ENCODE measurements at regions of chr15 and their contacts with region 1.

Region 1: DNA sequence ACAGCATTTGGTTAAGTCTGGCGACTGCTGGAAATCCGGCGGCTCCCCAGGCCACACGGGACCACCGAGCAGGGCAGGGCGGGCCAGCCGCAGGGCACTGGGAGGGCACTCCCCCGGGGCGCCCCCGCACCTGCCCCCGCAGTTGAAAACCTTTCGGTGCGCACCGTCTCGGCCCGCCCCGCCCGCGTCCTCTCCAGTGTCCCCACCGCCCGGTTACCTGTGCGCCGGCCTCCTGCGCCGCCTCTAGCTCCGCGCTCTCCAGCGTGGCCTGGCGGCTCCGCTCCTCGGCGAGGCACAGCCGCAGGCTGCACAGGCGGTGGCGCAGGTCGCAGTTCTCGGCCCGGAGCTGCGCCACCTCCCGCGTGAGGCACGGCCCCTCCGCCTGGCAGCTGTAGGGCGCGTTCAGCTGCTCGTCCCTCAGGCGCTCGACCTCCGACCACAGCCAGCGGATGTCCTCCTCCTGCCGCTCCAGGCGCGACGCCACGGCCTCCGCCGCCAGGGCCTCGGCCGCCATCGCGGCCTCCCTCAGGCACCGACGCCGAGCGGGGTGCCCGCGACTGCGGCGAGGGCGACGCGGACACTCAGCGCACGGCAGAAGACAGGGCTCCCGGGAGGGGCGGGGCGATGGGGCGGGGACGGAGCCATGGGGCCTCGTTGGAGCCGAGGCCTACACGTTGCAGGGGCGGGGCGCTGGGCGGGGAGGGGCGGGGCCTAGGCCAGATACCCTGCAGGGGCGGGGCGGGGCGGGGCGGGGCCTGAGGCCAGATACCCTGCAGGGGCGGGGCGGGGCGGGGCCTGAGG is at the start of gene TARS3:
- DNase-seq: peak; percentile 93 to 100 (median 97)
- ATAC-seq: peak; percentile 92
- H3K4me3 ChIP-seq: peak within 1 kb of the TSS; percentile 64
- H3K4me3 Mint-ChIP-seq: peak within 1 kb of the TSS; percentile 89
- H3K27ac ChIP-seq: peak within 1 kb of the TSS; percentile 61 to 81
- H3K27ac Mint-ChIP-seq: peak within 1 kb of the TSS; percentile 87
- H3K4me1 ChIP-seq: peaks cover 20% of the 10 kb centered on the region
- H3K4me1 Mint-ChIP-seq: peaks cover 42% of the 10 kb centered on the region
- H3K27me3 ChIP-seq: no peaks in the 10 kb centered on the region
- H3K27me3 Mint-ChIP-seq: no peaks in the 10 kb centered on the region
- CTCF ChIP-seq: peak; percentile 38
- total RNA-seq, gene TARS3: 16.6 to 18.1 TPM

Region 2: GRCh38 chr15:101697488-101697887 is 26.6 kb before region 1 on chr15:
- CTCF ChIA-PET with region 1: no interaction called
- POLR2A ChIA-PET with region 1: interaction called, 7 read pairs
- intact Hi-C with region 1: loop called in 1 of 2 experiments (anchors 2 kb)
- DNase-seq: peak in 4 of 14 experiments; percentile 2 to 34 (median 24)
- ATAC-seq: peak; percentile 90
- H3K4me3 ChIP-seq: no peak overlapping the region
- H3K4me3 Mint-ChIP-seq: peak overlapping the region; percentile 76
- H3K27ac ChIP-seq: peak overlapping the region in 1 of 2 donors; percentile 11
- H3K27ac Mint-ChIP-seq: peak overlapping the region; percentile 88
- H3K4me1 ChIP-seq: peaks cover 19% of the 10 kb centered on the region
- H3K4me1 Mint-ChIP-seq: peaks cover 44% of the 10 kb centered on the region
- H3K27me3 ChIP-seq: no peaks in the 10 kb centered on the region
- H3K27me3 Mint-ChIP-seq: no peaks in the 10 kb centered on the region
- CTCF ChIP-seq: no peak

Region 3: GRCh38 chr15:101710806-101711205 is 13.3 kb before region 1 on chr15:
- CTCF ChIA-PET with region 1: no interaction called
- POLR2A ChIA-PET with region 1: interaction called, 13 read pairs
- intact Hi-C with region 1: no loop called
- DNase-seq: no peak
- ATAC-seq: no peak
- H3K4me3 ChIP-seq: no peak overlapping the region
- H3K4me3 Mint-ChIP-seq: no peak overlapping the region
- H3K27ac ChIP-seq: no peak overlapping the region
- H3K27ac Mint-ChIP-seq: no peak overlapping the region
- H3K4me1 ChIP-seq: no peaks in the 10 kb centered on the region
- H3K4me1 Mint-ChIP-seq: peaks cover 17% of the 10 kb centered on the region
- H3K27me3 ChIP-seq: no peaks in the 10 kb centered on the region
- H3K27me3 Mint-ChIP-seq: no peaks in the 10 kb centered on the region
- CTCF ChIP-seq: no peak